GM12878 (cell line): ENCODE measurements at regions of chr12 and their contacts with region 1.

Region 1: DNA sequence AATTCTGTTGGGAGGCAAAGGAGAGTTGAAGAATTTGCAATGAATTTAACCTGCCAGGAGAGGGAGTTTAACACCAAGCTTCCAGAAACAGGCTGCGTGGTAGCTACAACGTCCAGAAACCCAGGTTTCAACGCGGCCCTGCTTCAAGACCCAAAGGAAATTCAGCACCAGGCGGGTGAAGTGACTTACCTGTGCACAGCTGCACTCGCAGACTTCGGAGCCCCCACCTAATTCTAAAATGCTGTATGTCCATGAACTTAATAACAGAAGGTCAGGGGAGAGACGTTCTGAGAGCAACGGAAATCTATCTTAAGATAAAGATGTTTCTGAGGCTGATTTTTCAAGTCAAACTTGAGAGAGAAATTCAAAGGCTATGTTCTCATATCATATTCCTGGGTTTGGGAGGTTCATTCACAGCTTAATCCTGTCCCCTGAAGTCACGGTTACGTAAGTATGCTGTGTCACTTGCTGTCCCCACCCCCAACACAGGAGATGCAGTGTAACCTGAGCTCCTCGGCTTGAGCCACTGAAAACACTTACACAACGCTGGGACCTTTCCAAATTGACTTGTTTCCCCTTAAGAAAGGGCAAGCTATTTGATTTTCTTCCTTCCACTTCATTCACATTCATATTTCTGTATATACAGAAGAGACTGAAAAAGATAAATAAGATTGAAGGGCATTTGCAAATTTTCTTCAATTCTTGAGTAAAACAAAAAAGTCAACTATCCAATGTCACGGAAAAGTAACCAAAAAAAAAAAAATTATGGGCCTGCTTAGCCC is 22.7 kb downstream of the CLIP1 start:
- DNase-seq: no peak
- ATAC-seq: peak; percentile 75
- H3K4me3 ChIP-seq: no peak overlapping the region
- H3K27ac ChIP-seq: peak overlapping the region; percentile 78
- H3K4me1 ChIP-seq: peaks cover 38% of the 10 kb centered on the region
- H3K27me3 ChIP-seq: no peaks in the 10 kb centered on the region
- CTCF ChIP-seq: peak; percentile 57 to 81 (median 76); a peak in 5 of 6 replicates
- EP300 ChIP-seq: no peak
- POLR2A ChIP-seq: no peak
- RAD21 ChIP-seq: peak; percentile 98

Region 2: DNA sequence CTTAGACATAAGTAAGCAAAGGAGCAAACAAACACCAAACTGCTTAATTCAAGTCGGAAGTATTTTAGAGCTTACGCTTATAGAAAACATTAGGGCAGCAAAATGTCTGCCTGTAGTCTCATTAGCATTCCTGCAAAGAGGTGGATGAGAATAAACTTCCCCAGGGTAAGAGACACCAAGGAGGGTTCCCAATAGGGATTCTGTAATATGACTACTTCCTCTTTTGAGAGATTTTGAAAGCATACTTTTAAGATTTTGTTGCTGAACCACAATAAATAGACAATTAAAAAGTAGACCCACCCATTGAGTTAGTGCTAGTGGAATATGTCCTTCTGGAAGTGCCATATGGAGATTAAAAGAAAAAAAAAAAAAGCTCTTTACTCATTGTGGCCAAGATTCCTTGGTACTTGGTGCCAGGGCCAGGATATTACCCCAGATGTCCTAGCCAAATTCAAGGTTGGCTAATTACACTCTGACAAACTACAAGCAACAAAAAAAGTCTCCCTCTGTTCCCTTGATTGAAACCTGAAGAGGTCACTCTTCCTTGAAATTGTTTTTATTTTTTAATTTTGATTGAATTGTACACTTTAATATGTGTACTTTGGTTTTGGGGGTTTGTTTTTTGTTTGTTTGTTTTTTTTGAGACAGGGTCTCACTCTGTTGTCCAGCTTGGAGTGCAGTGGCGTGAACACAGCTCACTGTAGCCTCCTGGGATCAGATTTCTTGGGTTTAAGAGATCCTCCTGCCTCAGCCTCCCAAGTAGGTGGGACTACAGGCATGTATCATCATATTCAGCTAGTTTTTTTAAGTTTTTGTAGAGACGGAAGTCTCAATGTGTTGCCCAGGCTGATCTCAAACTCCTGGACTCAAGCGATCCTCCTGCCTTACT is 14.0 kb after region 1 on chr12:
- CTCF ChIA-PET with region 1: interaction called, 100 read pairs
- POLR2A ChIA-PET with region 1: interaction called, 15 read pairs
- RAD21 ChIA-PET with region 1: interaction called, 20 read pairs
- SMC1A ChIA-PET with region 1: interaction called, 86 read pairs
- in situ Hi-C with region 1: no loop called
- intact Hi-C with region 1: no loop called
- DNase-seq: no peak
- ATAC-seq: peak; percentile 63
- H3K4me3 ChIP-seq: peak overlapping the region; percentile 50; the same call in 1 of the 2 replicates
- H3K27ac ChIP-seq: peak overlapping the region; percentile 95
- H3K4me1 ChIP-seq: peaks cover 36% of the 10 kb centered on the region
- H3K27me3 ChIP-seq: no peaks in the 10 kb centered on the region
- CTCF ChIP-seq: no peak
- EP300 ChIP-seq: 0 out of 4 replicates have a peak, but pooled peaks of 1 of the 2 experiments have one; percentile 27
- POLR2A ChIP-seq: no peak
- RAD21 ChIP-seq: no peak

Region 3: GRCh38 chr12:122421821-122422729 is 22.3 kb after region 1 on chr12 and contains the start of gene CLIP1:
- CTCF ChIA-PET with region 1: interaction called, 100 read pairs
- POLR2A ChIA-PET with region 1: interaction called, 7 read pairs
- RAD21 ChIA-PET with region 1: interaction called, 25 read pairs
- SMC1A ChIA-PET with region 1: interaction called, 86 read pairs
- in situ Hi-C with region 1: no loop called
- intact Hi-C with region 1: loop called (anchors 1 kb)
- DNase-seq: no peak
- ATAC-seq: peak; percentile 84
- H3K4me3 ChIP-seq: peak within 1 kb of the TSS; percentile 87
- H3K27ac ChIP-seq: peak within 1 kb of the TSS; percentile 88
- H3K4me1 ChIP-seq: peaks cover 25% of the 10 kb centered on the region
- H3K27me3 ChIP-seq: no peaks in the 10 kb centered on the region
- CTCF ChIP-seq: peak; percentile 30 to 57 (median 54); a peak in 4 of 6 replicates
- EP300 ChIP-seq: no peak
- POLR2A ChIP-seq: peak; percentile 72
- RAD21 ChIP-seq: peak; percentile 50
- polyA plus RNA-seq, gene CLIP1: 6.0 to 6.3 TPM

Region 4: DNA sequence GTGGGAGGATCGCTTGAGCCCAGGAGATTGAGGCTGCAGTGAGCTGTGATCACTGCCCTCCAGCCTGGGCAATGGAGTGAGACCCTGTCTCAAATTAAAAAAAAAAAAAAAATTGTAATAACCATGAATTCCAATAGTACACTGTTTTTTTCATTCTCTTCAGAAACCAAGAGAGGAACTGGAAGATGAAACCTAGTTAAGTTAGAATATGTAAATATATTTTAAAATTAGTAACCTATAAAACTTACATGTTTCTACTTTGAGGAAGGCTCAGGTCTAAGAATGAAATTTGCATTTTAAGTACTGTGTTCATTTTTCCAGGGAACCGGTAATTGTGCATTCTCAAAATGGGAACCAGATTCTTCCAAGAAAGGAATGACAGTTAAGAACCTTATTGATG is 146.1 kb after region 1 on chr12:
- CTCF ChIA-PET with region 1: interaction called, 18 read pairs
- POLR2A ChIA-PET with region 1: no interaction called
- RAD21 ChIA-PET with region 1: interaction called, 7 read pairs
- SMC1A ChIA-PET with region 1: interaction called, 7 read pairs
- in situ Hi-C with region 1: no loop called
- intact Hi-C with region 1: no loop called
- DNase-seq: no peak
- ATAC-seq: peak; percentile 82
- H3K4me3 ChIP-seq: no peak overlapping the region
- H3K27ac ChIP-seq: peak overlapping the region; percentile 73
- H3K4me1 ChIP-seq: peaks cover 18% of the 10 kb centered on the region
- H3K27me3 ChIP-seq: no peaks in the 10 kb centered on the region
- CTCF ChIP-seq: no peak
- EP300 ChIP-seq: no peak
- POLR2A ChIP-seq: no peak
- RAD21 ChIP-seq: no peak